Activated CD4-positive, alpha-beta memory T cell treated with anti-CD3 and anti-CD28 coated beads for 36 hours (primary cell): ENCODE measurements at regions of chr16 and their contacts with region 1.

Region 1: DNA sequence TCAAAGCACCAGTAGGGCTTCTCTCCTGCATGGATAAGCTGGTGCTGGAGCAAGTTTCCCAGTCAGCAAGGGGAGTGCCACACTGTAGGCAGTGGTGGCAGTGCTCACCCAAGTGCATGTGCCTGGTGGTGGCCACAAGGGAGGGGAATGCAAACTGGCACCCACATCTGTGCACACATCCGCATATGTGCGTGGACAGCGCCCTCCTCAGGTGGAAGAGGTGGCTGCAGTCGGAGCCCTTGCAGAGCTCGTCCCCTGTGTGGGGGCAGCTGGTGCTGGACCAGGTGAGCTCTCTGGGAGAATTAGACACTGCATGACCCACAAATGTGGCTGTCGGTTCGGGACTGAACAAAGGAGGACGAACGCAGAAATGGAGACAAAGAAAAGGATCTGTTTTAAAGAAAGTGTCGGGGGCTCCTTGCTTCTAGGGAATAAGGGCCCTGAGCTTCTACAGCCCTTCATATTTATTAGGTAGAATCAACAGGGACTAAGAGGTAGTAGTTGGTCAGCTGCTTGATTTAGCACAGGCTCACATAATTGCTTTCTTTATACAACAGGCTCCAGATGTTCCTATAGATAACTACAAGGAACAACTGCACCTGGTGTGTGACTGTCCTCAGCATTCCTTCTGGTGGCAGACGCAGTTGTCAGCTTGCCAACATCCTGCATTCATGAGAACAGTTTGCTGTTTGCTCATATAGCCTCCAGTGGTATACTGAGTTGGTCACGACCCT is 5.3 kb upstream of the ZNF689 start:
- DNase-seq: peak; percentile 91
- H3K4me3 Mint-ChIP-seq: no peak overlapping the region
- H3K27ac Mint-ChIP-seq: no peak overlapping the region
- H3K4me1 Mint-ChIP-seq: peaks cover 1% of the 10 kb centered on the region
- H3K27me3 Mint-ChIP-seq: no peaks in the 10 kb centered on the region

Region 2: GRCh38 chr16:30417529-30418349 is 197.8 kb before region 1 on chr16:
- CTCF ChIA-PET with region 1: interaction called, 11 read pairs
- POLR2A ChIA-PET with region 1: interaction called, 5 read pairs
- intact Hi-C with region 1: no loop called
- DNase-seq: peak; percentile 92
- H3K4me3 Mint-ChIP-seq: peak overlapping the region; percentile 58
- H3K27ac Mint-ChIP-seq: no peak overlapping the region
- H3K4me1 Mint-ChIP-seq: peaks cover 28% of the 10 kb centered on the region
- H3K27me3 Mint-ChIP-seq: no peaks in the 10 kb centered on the region

Region 3: DNA sequence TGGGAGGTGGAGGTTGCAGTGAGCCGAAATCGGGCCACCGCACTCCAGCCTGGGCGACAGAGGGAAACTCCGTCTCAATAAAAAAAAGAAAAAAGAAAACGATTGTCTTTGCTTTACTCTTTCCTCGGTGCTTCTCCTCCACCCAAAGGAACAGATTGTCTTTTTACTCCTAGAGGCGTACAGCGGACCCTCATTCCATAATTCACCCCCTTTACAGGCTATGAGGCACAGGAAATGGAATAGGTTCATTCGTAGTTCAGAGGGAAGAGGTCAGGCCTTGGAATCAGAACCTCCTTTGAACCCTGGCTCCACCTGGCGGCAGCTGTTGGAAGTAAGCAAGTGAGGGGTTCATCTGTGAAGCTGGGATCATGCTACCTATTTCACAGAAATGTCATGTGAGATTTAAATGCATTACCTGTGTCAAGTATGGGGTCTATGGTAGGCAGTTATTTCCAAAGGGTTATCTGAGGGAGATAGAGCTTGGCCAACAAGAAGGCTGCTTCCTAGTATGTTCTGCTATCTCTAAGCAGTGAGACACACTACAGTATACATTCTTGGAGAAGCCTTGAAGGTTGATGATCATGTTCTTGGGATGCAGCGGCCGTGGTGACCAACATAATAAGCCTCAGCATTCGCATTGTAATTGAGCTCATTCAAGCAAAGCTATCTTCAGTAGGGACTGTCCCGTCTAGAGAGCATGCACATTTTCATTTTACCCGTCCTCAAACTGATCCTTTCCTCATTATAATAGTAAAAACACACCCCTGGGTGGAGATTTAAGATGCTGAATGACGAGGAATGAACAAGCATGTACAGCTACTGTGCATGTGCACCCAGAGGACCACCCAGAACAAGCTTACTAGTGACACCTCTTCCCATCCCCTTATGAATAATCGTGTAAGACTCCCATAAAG is 13.4 kb after region 1 on chr16:
- CTCF ChIA-PET with region 1: interaction called, 34 read pairs
- POLR2A ChIA-PET with region 1: interaction called, 4 read pairs
- intact Hi-C with region 1: no loop called
- DNase-seq: peak; percentile 94
- H3K4me3 Mint-ChIP-seq: peak overlapping the region; percentile 60
- H3K27ac Mint-ChIP-seq: peak overlapping the region; percentile 57
- H3K4me1 Mint-ChIP-seq: peaks cover 4% of the 10 kb centered on the region
- H3K27me3 Mint-ChIP-seq: no peaks in the 10 kb centered on the region